ENCODE measurements at regions of chr10 and their contacts with region 1.

Region 1: DNA sequence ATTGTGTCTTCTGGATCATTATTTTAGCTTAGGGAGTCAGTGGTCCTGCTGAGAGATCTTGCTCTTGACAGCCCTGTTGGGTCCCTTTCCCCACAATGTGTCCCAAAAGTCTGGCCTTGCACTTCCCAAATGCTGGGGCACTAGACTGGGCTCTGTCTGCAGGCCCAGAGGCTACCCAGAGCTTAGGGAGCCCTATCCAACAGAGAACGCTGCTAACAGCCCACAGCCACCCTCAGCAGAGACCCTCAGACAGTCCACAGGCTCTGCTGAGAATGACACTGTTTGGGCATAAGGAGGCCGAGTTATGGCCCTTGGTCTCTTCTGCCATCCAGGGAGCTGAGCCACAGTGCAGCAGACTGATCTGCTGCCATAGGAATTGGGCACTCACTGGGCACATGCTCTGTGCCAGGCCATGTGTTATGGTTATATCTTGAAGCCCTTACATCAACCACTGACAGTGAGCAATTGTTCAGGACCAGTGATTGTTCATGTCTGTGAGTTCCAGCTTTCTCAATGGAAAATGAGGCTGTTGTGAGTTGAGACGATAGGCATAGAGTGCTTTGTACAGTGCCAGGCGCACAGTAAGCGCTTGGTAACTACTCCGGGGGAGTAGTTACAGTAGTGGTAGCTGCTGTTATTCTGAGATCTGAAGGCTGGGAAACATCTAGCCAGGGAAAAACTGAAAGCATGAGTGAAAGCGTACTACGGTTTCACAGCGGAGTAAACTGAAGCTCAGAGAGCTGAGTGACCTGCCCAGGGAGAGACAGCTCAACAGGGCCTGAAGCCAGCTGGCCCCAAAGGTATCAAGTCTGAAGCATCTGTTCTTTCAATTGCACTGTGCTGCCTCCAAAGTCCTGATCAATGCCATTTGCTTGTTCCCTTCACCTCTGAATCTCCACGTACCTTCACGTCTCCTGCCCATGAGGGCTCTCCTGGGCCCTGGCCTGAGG is 77.6 kb upstream of the PRLHR start:
- DNase-seq: no peak
- H3K4me3 Mint-ChIP-seq: no peak overlapping the region
- H3K27ac Mint-ChIP-seq: no peak overlapping the region
- H3K4me1 Mint-ChIP-seq: no peaks in the 10 kb centered on the region
- H3K27me3 Mint-ChIP-seq: no peaks in the 10 kb centered on the region

Region 2: DNA sequence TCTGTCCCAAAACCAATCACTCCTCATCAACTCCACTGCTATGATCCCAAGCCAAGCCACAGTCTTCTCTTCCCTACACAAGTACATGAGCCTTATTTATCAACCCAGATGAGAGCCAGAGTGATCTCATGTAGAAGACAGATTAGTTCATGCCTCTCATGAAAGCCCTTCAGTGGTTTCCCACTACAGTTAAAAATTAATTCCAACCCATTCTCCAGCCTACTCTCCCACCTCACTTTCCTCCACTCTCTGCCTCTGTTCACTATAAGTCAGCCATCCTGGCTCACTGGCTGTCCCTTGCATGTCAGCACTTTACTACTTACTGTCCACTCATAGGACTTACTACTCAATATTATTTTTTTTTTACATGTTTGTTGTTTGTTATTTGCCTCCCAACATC is 14.4 kb after region 1 on chr10:
- intact Hi-C with region 1: no loop called
- DNase-seq: no peak
- H3K4me3 Mint-ChIP-seq: no peak overlapping the region
- H3K27ac Mint-ChIP-seq: no peak overlapping the region
- H3K4me1 Mint-ChIP-seq: no peaks in the 10 kb centered on the region
- H3K27me3 Mint-ChIP-seq: no peaks in the 10 kb centered on the region

Region 3: DNA sequence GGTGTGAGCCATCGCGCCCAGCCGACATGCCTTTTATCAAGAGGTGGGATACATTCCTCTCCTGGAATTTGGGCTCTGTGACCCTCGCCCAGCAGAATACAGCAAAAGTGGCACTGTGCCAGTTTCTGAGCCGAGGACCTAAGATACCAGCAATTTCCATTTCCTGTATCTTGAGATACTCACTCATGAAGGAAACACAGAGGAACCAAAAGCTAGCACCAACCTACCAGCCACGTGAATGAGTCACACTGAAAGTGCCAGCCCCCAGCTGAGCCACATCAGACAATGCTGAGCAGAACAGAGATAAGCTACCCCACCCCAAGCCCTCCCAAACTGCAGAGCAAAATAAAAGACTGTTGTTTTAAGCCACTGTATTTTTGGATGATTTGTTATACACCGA is 25.4 kb after region 1 on chr10:
- intact Hi-C with region 1: no loop called
- DNase-seq: peak; percentile 92
- H3K4me3 Mint-ChIP-seq: peak overlapping the region; percentile 60
- H3K27ac Mint-ChIP-seq: peak overlapping the region; percentile 15
- H3K4me1 Mint-ChIP-seq: peaks cover 30% of the 10 kb centered on the region
- H3K27me3 Mint-ChIP-seq: no peaks in the 10 kb centered on the region

Region 4: GRCh38 chr10:118712930-118713634 is 40.0 kb after region 1 on chr10:
- intact Hi-C with region 1: loop called (anchors 1 kb)
- DNase-seq: no peak
- H3K4me3 Mint-ChIP-seq: no peak overlapping the region
- H3K27ac Mint-ChIP-seq: no peak overlapping the region
- H3K4me1 Mint-ChIP-seq: peaks cover 22% of the 10 kb centered on the region
- H3K27me3 Mint-ChIP-seq: no peaks in the 10 kb centered on the region

Measured in activated CD4-positive, alpha-beta T cell treated with anti-CD3 and anti-CD28 coated beads, Interleukin-2, amount 10 ng/mL, durations not matched to agents 24 days and 14 days (primary cell).